B cell (primary cell): ENCODE measurements at regions of chr6 and their contacts with region 1.

Region 1: DNA sequence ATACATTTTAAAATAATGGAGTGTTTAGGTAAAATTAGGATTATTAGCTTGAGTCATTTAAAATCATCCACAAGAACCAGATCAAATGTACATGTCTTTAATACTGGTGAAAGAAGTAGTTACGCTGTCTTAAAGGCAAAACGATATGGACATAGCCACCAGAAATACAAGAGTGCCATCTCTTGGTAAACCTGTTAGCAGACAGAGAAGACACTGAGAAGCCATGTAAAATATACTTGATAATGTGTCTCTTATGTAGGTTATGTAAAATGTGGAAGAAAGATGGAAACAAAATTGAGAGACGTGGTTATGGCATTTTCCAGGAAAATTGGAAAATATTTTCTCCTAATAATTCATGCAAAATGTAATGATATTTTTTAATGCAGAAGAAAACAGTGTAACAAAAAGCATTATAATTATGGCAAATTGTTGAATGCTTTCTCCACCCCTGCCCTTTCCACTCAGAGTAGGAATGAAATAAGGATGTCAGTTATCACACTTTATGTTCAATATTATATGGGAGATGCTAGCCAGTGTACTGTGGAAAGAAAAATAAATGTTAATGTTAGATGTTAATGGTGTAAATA is 12.2 kb upstream of the SLC17A2 start:
- DNase-seq: peak; percentile 65
- ATAC-seq: peak; percentile 47
- H3K4me3 ChIP-seq: no peak overlapping the region
- H3K4me3 Mint-ChIP-seq: no peak overlapping the region
- H3K27ac ChIP-seq: no peak overlapping the region
- H3K27ac Mint-ChIP-seq: no peak overlapping the region
- H3K4me1 ChIP-seq: no peaks in the 10 kb centered on the region
- H3K4me1 Mint-ChIP-seq: peaks cover 10% of the 10 kb centered on the region
- H3K27me3 ChIP-seq: no peaks in the 10 kb centered on the region
- H3K27me3 Mint-ChIP-seq: peaks cover 4% of the 10 kb centered on the region
- CTCF ChIP-seq: peak; percentile 70

Region 2: GRCh38 chr6:25511376-25511775 is 431.3 kb before region 1 on chr6:
- CTCF ChIA-PET with region 1: no interaction called
- POLR2A ChIA-PET with region 1: no interaction called
- intact Hi-C with region 1: no loop called
- DNase-seq: no peak
- ATAC-seq: no peak
- H3K4me3 ChIP-seq: no peak overlapping the region
- H3K4me3 Mint-ChIP-seq: no peak overlapping the region
- H3K27ac ChIP-seq: no peak overlapping the region
- H3K27ac Mint-ChIP-seq: no peak overlapping the region
- H3K4me1 ChIP-seq: no peaks in the 10 kb centered on the region
- H3K4me1 Mint-ChIP-seq: no peaks in the 10 kb centered on the region
- H3K27me3 ChIP-seq: no peaks in the 10 kb centered on the region
- H3K27me3 Mint-ChIP-seq: no peaks in the 10 kb centered on the region
- CTCF ChIP-seq: no peak

Region 3: DNA sequence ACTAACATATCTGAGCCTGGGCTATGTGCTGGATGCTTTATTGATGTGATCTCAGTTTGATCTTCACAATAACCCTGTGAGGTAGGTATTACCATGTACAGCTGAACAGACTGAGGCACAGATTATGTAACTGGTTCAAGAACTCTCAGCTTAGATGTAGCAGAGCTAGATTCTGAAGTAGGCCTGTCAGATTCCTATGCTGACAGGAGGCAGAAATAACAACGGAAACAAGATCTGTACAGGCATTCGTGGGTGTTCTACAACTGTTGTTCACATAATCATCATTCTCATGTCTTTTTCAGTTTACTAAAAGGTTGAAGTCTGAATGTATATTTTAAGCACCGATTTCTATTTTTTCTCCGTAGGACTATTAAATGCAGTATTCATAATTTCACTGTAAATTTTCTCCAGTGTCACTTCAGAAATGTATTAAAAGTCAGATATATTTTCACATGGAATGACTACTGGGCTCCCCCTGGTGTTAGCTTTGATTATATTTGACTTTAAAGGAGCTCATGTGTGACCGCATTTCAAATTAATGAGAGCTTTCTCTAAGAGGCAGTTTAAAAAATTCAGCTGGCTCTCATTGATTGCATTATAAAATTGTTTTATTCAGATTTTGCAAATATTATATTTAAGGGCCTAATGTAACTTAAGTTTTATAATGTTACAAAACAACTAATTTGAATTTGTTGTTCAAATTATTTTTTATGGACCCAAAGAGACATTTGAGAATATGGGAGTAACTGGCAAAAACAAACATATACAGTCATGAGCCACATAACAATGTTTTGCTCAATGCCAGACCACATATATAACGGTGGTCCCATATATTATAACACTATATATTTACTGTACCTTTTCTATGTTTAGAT is 224.6 kb before region 1 on chr6:
- CTCF ChIA-PET with region 1: interaction called, 12 read pairs
- POLR2A ChIA-PET with region 1: no interaction called
- intact Hi-C with region 1: no loop called
- DNase-seq: peak; percentile 51
- ATAC-seq: no peak
- H3K4me3 ChIP-seq: no peak overlapping the region
- H3K4me3 Mint-ChIP-seq: no peak overlapping the region
- H3K27ac ChIP-seq: no peak overlapping the region
- H3K27ac Mint-ChIP-seq: no peak overlapping the region
- H3K4me1 ChIP-seq: no peaks in the 10 kb centered on the region
- H3K4me1 Mint-ChIP-seq: no peaks in the 10 kb centered on the region
- H3K27me3 ChIP-seq: no peaks in the 10 kb centered on the region
- H3K27me3 Mint-ChIP-seq: peaks cover 12% of the 10 kb centered on the region
- CTCF ChIP-seq: peak; percentile 79

Region 4: GRCh38 chr6:25788305-25788922 is 154.2 kb before region 1 on chr6:
- CTCF ChIA-PET with region 1: interaction called, 16 read pairs
- POLR2A ChIA-PET with region 1: no interaction called
- intact Hi-C with region 1: loop called (anchors 1 kb)
- DNase-seq: peak; percentile 57
- ATAC-seq: peak; percentile 49
- H3K4me3 ChIP-seq: no peak overlapping the region
- H3K4me3 Mint-ChIP-seq: no peak overlapping the region
- H3K27ac ChIP-seq: no peak overlapping the region
- H3K27ac Mint-ChIP-seq: no peak overlapping the region
- H3K4me1 ChIP-seq: no peaks in the 10 kb centered on the region
- H3K4me1 Mint-ChIP-seq: no peaks in the 10 kb centered on the region
- H3K27me3 ChIP-seq: no peaks in the 10 kb centered on the region
- H3K27me3 Mint-ChIP-seq: peaks cover 5% of the 10 kb centered on the region
- CTCF ChIP-seq: peak; percentile 60

Region 5: DNA sequence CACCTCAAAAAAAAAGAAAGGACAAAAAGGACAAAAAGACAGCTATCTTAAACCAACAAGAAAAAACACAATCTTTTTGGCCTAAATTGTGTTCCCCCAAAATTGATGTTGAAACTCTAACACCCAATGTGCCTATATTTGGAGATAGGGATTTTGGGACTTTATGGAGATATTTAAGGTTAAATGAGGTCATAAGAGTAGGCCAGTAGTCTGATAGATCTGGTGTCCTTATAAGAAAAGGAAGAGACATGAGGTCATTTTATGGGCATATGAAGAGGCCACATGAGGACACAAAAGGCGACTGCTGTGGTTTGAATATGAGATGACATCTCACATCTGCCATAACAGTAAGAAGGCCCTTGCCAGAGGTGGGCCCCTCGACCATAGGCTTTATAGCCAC is 69.4 kb after region 1 on chr6:
- CTCF ChIA-PET with region 1: no interaction called
- POLR2A ChIA-PET with region 1: no interaction called
- intact Hi-C with region 1: no loop called
- DNase-seq: no peak
- ATAC-seq: no peak
- H3K4me3 ChIP-seq: no peak overlapping the region
- H3K4me3 Mint-ChIP-seq: no peak overlapping the region
- H3K27ac ChIP-seq: no peak overlapping the region
- H3K27ac Mint-ChIP-seq: no peak overlapping the region
- H3K4me1 ChIP-seq: peaks cover 0 to under 1% of the 10 kb centered on the region in 2 donors
- H3K4me1 Mint-ChIP-seq: peaks cover under 1% of the 10 kb centered on the region
- H3K27me3 ChIP-seq: no peaks in the 10 kb centered on the region
- H3K27me3 Mint-ChIP-seq: no peaks in the 10 kb centered on the region
- CTCF ChIP-seq: no peak